Mammary epithelial cell (primary cell): ENCODE measurements at regions of chr1 and their contacts with region 1.

Region 1: DNA sequence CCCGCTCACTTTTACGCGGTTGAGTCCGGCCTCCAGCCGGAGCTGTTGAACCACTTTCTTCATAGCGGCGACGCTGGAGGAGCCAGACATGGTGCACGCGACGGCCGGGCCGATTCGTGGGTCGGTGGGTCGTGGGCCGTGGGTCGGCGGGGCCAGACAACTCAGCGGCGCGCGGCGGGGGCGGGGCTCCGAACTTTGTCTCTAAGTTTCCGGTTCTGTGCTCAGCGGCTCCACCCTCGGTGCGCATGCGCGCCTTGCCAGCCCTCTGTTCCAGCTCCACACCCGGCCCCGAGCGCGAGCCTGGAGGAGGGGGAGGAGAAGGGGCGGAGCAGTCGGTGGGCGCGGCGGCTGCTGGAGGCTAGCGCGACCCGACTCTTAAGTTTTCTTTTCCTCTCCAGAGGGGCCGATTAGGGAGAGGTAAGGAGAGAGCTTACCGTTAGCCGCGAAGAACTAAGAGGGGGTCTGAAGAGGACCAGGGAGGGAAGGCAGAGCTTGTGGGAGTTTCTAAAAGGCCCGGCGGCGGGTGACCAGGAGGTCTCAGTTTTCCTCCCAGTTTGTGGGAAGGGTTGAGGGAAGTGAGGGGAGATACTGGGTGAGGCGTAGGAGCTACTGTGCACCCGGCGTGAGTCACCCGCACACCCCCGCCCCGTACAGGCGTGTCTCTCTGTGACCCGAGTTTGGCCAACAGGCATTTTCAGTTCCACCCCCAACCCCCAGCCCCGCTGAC is at the starts of genes GNG5 and SPATA1:
- DNase-seq: peak; percentile 95
- H3K4me3 ChIP-seq: peak within 1 kb of the TSS; percentile 85 to 98 (median 95)
- H3K27ac ChIP-seq: peak within 1 kb of the TSS; percentile 92
- H3K4me1 ChIP-seq: peaks cover 16% of the 10 kb centered on the region
- H3K27me3 ChIP-seq: no peaks in the 10 kb centered on the region
- CTCF ChIP-seq: no peak
- total RNA-seq, gene GNG5: 20.5 to 115 TPM
- total RNA-seq, gene SPATA1: 0.33 to 1.4 TPM

Region 2: GRCh38 chr1:84271441-84272151 is 234.6 kb before region 1 on chr1:
- CTCF ChIA-PET with region 1: no interaction called
- dilution Hi-C with region 1: no loop called
- in situ Hi-C with region 1: no loop called
- intact Hi-C with region 1: no loop called
- DNase-seq: no peak
- H3K4me3 ChIP-seq: no peak overlapping the region
- H3K27ac ChIP-seq: no peak overlapping the region
- H3K4me1 ChIP-seq: no peaks in the 10 kb centered on the region
- H3K27me3 ChIP-seq: no peaks in the 10 kb centered on the region
- CTCF ChIP-seq: no peak

Region 3: GRCh38 chr1:84319662-84320061 is 186.5 kb before region 1 on chr1:
- CTCF ChIA-PET with region 1: no interaction called
- dilution Hi-C with region 1: no loop called
- in situ Hi-C with region 1: no loop called
- intact Hi-C with region 1: no loop called
- DNase-seq: peak; percentile 16
- H3K4me3 ChIP-seq: no peak overlapping the region
- H3K27ac ChIP-seq: no peak overlapping the region
- H3K4me1 ChIP-seq: peaks cover 8% of the 10 kb centered on the region
- H3K27me3 ChIP-seq: no peaks in the 10 kb centered on the region
- CTCF ChIP-seq: no peak

Region 4: GRCh38 chr1:84450910-84451309 is 55.3 kb before region 1 on chr1:
- CTCF ChIA-PET with region 1: no interaction called
- dilution Hi-C with region 1: no loop called
- in situ Hi-C with region 1: no loop called
- intact Hi-C with region 1: no loop called
- DNase-seq: peak; percentile 6
- H3K4me3 ChIP-seq: no peak overlapping the region
- H3K27ac ChIP-seq: no peak overlapping the region
- H3K4me1 ChIP-seq: no peaks in the 10 kb centered on the region
- H3K27me3 ChIP-seq: no peaks in the 10 kb centered on the region
- CTCF ChIP-seq: no peak

Region 5: GRCh38 chr1:84573967-84574842 is 68.0 kb after region 1 on chr1 and contains the start of gene CTBS:
- CTCF ChIA-PET with region 1: interaction called, 4 read pairs
- dilution Hi-C with region 1: no loop called
- in situ Hi-C with region 1: no loop called
- intact Hi-C with region 1: loop called (anchors 5 kb)
- DNase-seq: peak; percentile 79
- H3K4me3 ChIP-seq: peak within 1 kb of the TSS; percentile 61 to 80 (median 68)
- H3K27ac ChIP-seq: peak within 1 kb of the TSS; percentile 83
- H3K4me1 ChIP-seq: peaks cover 22% of the 10 kb centered on the region
- H3K27me3 ChIP-seq: no peaks in the 10 kb centered on the region
- CTCF ChIP-seq: no peak
- total RNA-seq, gene CTBS: 12.3 to 13.1 TPM

Region 6: DNA sequence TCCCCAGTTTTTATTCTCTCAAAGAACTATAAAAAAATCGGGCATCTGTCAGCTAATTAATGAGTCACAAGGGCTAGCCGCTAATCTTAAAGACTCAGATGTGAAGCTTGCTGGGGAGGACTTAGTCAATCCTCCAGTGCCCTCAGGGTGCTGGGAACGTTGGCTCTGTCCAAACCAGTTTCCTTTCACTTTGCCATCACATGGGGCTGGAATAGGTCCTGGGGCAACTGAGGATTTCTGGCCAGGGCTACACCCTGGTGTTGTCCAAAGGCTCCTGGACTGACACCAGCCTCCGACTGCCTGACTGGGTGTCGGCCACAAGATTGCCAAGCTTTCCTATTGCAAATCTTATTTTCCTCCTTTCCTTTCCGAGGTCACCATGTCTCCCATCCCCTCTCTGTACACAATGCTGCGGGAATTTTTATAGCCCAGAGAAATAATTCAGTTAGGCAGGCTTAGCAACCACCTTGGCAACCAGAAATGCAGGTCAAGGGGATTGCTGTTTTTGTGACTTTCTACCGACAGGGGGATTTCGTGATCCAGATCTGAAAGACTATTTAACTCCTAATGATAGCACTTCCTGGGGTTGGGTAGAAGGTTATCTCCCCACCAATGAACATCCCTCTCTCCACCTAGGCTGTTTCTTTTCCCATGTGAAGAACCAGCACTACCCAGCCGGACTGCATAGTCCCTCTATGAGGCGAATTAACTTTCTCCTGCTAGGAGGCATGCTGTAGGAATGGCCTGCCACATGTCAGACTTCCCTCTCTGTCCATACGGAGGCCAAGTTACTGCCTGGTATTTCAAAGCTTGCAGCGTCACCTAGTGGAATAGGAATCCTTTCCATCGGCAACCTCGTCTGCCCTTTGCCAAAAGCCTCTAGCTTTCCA is 98.0 kb after region 1 on chr1:
- CTCF ChIA-PET with region 1: no interaction called
- dilution Hi-C with region 1: no loop called
- in situ Hi-C with region 1: no loop called
- intact Hi-C with region 1: no loop called
- DNase-seq: peak; percentile 96
- H3K4me3 ChIP-seq: peak overlapping the region; percentile 12 to 20 (median 18)
- H3K27ac ChIP-seq: peak overlapping the region; percentile 81
- H3K4me1 ChIP-seq: peaks cover 26% of the 10 kb centered on the region
- H3K27me3 ChIP-seq: no peaks in the 10 kb centered on the region
- CTCF ChIP-seq: peak; percentile 32 to 58